Ovary (tissue), 10 donors: ENCODE measurements at regions of chr6 and their contacts with region 1.

Region 1: DNA sequence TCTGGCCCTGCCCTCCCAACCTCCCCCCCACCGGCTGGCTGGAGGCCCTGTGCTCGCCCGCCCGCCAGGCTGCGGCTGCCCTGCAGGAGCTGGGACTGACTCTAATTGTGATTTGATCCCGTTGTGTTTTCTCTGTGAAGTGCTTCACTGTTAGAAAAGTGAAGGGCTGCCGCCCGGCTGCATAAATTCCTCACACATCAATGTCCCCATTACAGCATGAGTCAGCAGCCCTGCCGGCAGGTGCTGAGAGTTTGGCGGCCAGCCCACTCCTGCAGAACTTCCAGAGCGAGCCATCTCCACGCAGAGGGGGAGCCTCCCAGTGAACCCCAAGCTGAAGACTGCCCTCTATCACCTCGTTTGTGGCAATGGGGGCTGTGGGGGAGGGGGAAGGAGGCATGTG is 137.9 kb downstream of the DLL1 start:
- DNase-seq: peak in 2 of 5 donors; percentile 30 to 58
- H3K4me3 ChIP-seq: no peak overlapping the region
- H3K27ac ChIP-seq: no peak overlapping the region
- H3K4me1 ChIP-seq: no peaks in the 10 kb centered on the region
- H3K27me3 ChIP-seq: no peaks in the 10 kb centered on the region
- CTCF ChIP-seq: no peak
- EP300 ChIP-seq: no peak
- POLR2A ChIP-seq: no peak

Region 2: GRCh38 chr6:168226061-168226752 is 1926.8 kb before region 1 on chr6:
- intact Hi-C with region 1: loop called in 1 of 4 experiments (anchors 10 kb)
- DNase-seq: no peak
- H3K4me3 ChIP-seq: no peak overlapping the region
- H3K27ac ChIP-seq: no peak overlapping the region
- H3K4me1 ChIP-seq: no peaks in the 10 kb centered on the region
- H3K27me3 ChIP-seq: no peaks in the 10 kb centered on the region
- CTCF ChIP-seq: no peak
- EP300 ChIP-seq: no peak
- POLR2A ChIP-seq: no peak